ENCODE measurements at regions of chr13 and their contacts with region 1.

Region 1: DNA sequence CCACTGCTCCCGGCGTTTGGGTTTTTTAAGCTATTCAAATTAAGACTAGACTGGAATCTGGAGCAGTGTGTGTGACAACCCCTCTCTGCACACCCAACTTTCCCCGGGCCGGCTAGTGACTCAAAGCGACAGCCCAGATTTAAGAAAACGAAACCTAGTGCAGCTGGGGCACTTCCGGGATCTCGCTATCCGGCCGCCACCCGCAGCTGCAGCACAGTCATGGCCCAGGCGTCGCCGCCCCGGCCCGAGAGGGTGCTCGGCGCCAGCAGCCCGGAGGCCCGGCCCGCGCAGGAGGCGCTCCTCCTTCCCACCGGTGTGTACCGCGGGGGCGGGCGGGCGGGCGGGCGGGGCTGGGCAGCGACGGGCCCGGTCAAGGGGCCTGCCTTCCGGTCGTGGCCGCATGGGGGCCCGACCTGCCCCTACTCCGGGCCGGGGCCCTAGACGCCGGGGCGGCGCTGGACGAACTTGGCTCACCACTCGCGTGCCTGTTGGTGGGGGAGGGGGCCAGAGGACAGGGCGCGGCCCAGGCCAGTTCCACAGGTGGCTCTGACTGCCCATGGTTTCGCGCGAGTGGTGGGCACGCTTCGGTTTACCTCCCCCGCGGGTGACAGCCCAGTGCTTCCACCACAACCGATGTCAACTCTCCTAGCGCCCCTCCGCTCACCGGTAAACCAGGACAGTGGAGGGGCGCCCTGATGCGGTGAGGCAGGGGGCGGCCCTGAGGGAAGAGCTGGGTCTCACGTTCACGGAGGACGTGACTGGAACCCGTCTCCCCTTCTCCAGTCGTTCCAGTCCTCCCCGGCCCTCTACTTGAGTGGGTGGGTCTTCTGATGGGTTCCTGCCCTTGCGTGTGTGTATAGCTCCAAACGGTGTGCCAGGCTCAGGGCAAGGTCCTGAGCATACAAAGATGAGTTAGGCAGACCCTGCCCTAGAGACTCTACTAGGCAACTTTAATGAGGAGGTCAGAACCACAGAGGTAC is at the start of gene PHF11:
- DNase-seq: peak; percentile 96
- H3K4me3 Mint-ChIP-seq: peak within 1 kb of the TSS; percentile 95
- H3K27ac Mint-ChIP-seq: peak within 1 kb of the TSS; percentile 99
- H3K4me1 Mint-ChIP-seq: peaks cover 51% of the 10 kb centered on the region
- H3K27me3 Mint-ChIP-seq: no peaks in the 10 kb centered on the region
- total RNA-seq, gene PHF11: 56.8 and 60.8 TPM in 2 replicates

Region 2: GRCh38 chr13:49110122-49110912 is 385.8 kb before region 1 on chr13:
- intact Hi-C with region 1: loop called (anchors 5 kb)
- DNase-seq: peak; percentile 93
- H3K4me3 Mint-ChIP-seq: peak overlapping the region; percentile 81
- H3K27ac Mint-ChIP-seq: peak overlapping the region; percentile 68
- H3K4me1 Mint-ChIP-seq: peaks cover 19% of the 10 kb centered on the region
- H3K27me3 Mint-ChIP-seq: no peaks in the 10 kb centered on the region

Region 3: GRCh38 chr13:49443704-49444523 is 52.2 kb before region 1 on chr13 and contains the starts of genes CAB39L and SETDB2:
- intact Hi-C with region 1: loop called (anchors 1 kb)
- DNase-seq: peak; percentile 100
- H3K4me3 Mint-ChIP-seq: peak within 1 kb of the TSS; percentile 95
- H3K27ac Mint-ChIP-seq: peak within 1 kb of the TSS; percentile 98
- H3K4me1 Mint-ChIP-seq: peaks cover 44% of the 10 kb centered on the region
- H3K27me3 Mint-ChIP-seq: peaks cover 2% of the 10 kb centered on the region
- total RNA-seq, gene CAB39L: 5.7 and 6.8 TPM in 2 replicates
- total RNA-seq, gene SETDB2: 13.4 and 14.5 TPM in 2 replicates

Region 4: GRCh38 chr13:49585220-49586157 is 89.4 kb after region 1 on chr13 and contains the start of gene RCBTB1:
- intact Hi-C with region 1: loop called (anchors 2 kb)
- DNase-seq: peak; percentile 92
- H3K4me3 Mint-ChIP-seq: peak within 1 kb of the TSS; percentile 90
- H3K27ac Mint-ChIP-seq: peak within 1 kb of the TSS; percentile 79
- H3K4me1 Mint-ChIP-seq: peaks cover 29% of the 10 kb centered on the region
- H3K27me3 Mint-ChIP-seq: peaks cover 5% of the 10 kb centered on the region
- total RNA-seq, gene RCBTB1: 14.8 and 16.2 TPM in 2 replicates

Region 5: DNA sequence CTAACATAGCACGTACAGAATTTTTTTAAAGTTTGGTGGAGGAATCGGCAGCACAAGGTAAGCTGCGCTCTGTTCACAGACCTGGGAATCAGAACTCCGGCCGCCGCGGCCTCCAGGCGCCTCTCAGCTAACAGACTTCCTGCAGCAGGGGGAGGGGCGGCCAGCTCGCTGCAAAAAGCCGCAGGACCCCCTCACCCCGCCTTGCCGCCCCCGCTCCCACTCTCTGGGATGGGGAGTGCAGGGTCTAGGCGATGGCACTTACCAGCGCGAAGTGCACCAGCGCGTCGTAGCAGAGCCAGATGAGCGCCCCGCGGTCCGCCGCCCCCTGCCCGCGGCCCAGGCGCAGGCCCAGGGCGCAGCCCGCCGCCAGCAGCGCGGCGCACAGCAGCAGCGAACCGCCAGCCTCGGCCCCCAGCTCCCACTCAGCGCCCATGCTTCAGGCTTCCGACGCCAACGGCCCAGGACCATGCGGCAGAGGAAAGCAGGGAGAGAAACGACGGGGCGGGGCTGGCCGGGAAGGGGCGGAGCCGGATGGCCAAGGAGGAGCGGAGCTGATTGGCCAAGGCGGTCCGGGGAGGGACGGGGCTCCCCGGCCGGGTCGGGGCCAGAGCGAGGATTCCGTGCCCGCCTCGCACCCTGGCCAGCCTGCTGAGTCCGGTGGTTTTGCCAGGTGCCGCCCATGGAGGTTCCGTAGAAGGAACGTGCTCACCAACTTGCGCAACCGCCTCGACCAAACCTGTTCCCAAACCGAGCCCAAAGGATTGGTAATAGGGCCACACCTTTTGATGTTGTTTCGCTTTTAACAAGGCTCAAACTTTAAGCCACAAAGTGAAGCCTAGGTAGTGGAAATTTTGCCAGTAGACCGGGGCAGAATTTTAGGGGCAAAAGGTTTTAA is 195.2 kb after region 1 on chr13 and contains the start of gene EBPL:
- intact Hi-C with region 1: loop called (anchors 5 kb)
- DNase-seq: peak; percentile 96
- H3K4me3 Mint-ChIP-seq: peak within 1 kb of the TSS; percentile 93
- H3K27ac Mint-ChIP-seq: peak within 1 kb of the TSS; percentile 81
- H3K4me1 Mint-ChIP-seq: peaks cover 24% of the 10 kb centered on the region
- H3K27me3 Mint-ChIP-seq: no peaks in the 10 kb centered on the region
- total RNA-seq, gene EBPL: 49.0 and 52.3 TPM in 2 replicates

Region 6: GRCh38 chr13:50236898-50237318 is 740.8 kb after region 1 on chr13:
- intact Hi-C with region 1: loop called (anchors 5 kb)
- DNase-seq: peak; percentile 83
- H3K4me3 Mint-ChIP-seq: peak overlapping the region; percentile 23
- H3K27ac Mint-ChIP-seq: peak overlapping the region; percentile 84
- H3K4me1 Mint-ChIP-seq: peaks cover 34% of the 10 kb centered on the region
- H3K27me3 Mint-ChIP-seq: peaks cover 29% of the 10 kb centered on the region

Measured in activated CD4-positive, alpha-beta T cell treated with anti-CD3 and anti-CD28 coated beads, Interleukin-2, amount 10 ng/mL, durations not matched to agents 24 days and 14 days (primary cell).